Activated B cell treated with CpG ODN at 0.5 μM for 24 hours (primary cell): ENCODE measurements at regions of chr1 and their contacts with region 1.

Region 1: GRCh38 chr1:114511032-114511785 is at the start of gene TRIM33:
- DNase-seq: peak; percentile 93
- ATAC-seq: peak; percentile 73
- H3K4me3 Mint-ChIP-seq: peak within 1 kb of the TSS; percentile 98
- H3K27ac Mint-ChIP-seq: peak within 1 kb of the TSS; percentile 99
- H3K4me1 Mint-ChIP-seq: peaks cover 48% of the 10 kb centered on the region
- H3K27me3 Mint-ChIP-seq: no peaks in the 10 kb centered on the region
- CTCF ChIP-seq: no peak
- total RNA-seq, gene TRIM33: 38.4 and 41.2 TPM in 2 replicates

Region 2: DNA sequence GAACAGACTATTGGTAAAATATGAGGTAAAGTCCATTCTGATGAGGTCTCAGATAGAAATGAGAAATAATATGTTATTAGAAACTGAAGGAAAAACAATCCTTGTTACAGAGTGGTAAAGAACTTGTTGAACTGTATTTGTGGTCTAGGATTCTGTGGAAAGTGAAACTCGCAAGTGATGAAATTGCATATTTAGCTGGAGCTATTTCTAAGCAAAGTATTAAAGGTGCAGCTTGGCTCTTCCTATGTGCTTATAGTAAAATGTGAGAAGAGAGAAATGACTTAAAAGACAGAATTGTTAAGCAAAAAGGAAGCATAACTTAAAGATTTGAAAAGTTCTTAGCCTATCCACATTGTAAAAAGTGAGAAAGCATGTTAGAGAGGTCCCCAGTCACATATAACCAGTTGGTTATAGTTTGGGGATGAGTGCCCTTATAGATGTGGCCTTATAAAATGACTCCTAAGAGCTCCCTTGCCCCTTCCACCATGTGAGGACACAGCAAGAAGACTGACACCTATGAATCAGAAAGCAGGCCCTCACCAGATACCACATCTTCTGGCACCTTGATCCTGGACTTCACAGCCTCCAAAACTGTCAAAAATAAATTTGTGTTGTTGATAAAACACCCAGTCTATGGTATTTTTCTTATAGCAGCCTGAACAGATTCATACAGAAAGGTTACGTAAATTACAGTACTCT is 776.7 kb before region 1 on chr1:
- CTCF ChIA-PET with region 1: no interaction called
- POLR2A ChIA-PET with region 1: no interaction called
- intact Hi-C with region 1: no loop called
- DNase-seq: no peak
- ATAC-seq: no peak
- H3K4me3 Mint-ChIP-seq: no peak overlapping the region
- H3K27ac Mint-ChIP-seq: no peak overlapping the region
- H3K4me1 Mint-ChIP-seq: no peaks in the 10 kb centered on the region
- H3K27me3 Mint-ChIP-seq: no peaks in the 10 kb centered on the region
- CTCF ChIP-seq: no peak

Region 3: GRCh38 chr1:113928941-113929749 is 582.1 kb before region 1 on chr1 and contains the start of gene HIPK1:
- CTCF ChIA-PET with region 1: no interaction called
- POLR2A ChIA-PET with region 1: no interaction called
- intact Hi-C with region 1: loop called (anchors 5 kb)
- DNase-seq: peak; percentile 93
- ATAC-seq: peak; percentile 73
- H3K4me3 Mint-ChIP-seq: peak within 1 kb of the TSS; percentile 99
- H3K27ac Mint-ChIP-seq: peak within 1 kb of the TSS; percentile 99
- H3K4me1 Mint-ChIP-seq: peaks cover 50% of the 10 kb centered on the region
- H3K27me3 Mint-ChIP-seq: no peaks in the 10 kb centered on the region
- CTCF ChIP-seq: no peak
- total RNA-seq, gene HIPK1: 38.0 and 39.0 TPM in 2 replicates

Region 4: GRCh38 chr1:114482204-114482980 is 28.8 kb before region 1 on chr1:
- CTCF ChIA-PET with region 1: no interaction called
- POLR2A ChIA-PET with region 1: interaction called, 22 read pairs
- intact Hi-C with region 1: loop called (anchors 1 kb)
- DNase-seq: no peak
- ATAC-seq: peak; percentile 99
- H3K4me3 Mint-ChIP-seq: peak overlapping the region; percentile 72
- H3K27ac Mint-ChIP-seq: peak overlapping the region; percentile 91
- H3K4me1 Mint-ChIP-seq: peaks cover 54% of the 10 kb centered on the region
- H3K27me3 Mint-ChIP-seq: no peaks in the 10 kb centered on the region
- CTCF ChIP-seq: no peak

Region 5: GRCh38 chr1:114558544-114558943 is 47.3 kb after region 1 on chr1:
- CTCF ChIA-PET with region 1: no interaction called
- POLR2A ChIA-PET with region 1: interaction called, 14 read pairs
- intact Hi-C with region 1: loop called (anchors 1 kb)
- DNase-seq: no peak
- ATAC-seq: peak; percentile 59
- H3K4me3 Mint-ChIP-seq: no peak overlapping the region
- H3K27ac Mint-ChIP-seq: peak overlapping the region; percentile 62
- H3K4me1 Mint-ChIP-seq: peaks cover 34% of the 10 kb centered on the region
- H3K27me3 Mint-ChIP-seq: no peaks in the 10 kb centered on the region
- CTCF ChIP-seq: no peak

Region 6: GRCh38 chr1:114670083-114671010 is 159.1 kb after region 1 on chr1:
- CTCF ChIA-PET with region 1: no interaction called
- POLR2A ChIA-PET with region 1: no interaction called
- intact Hi-C with region 1: loop called (anchors 1 kb)
- DNase-seq: peak; percentile 80
- ATAC-seq: peak; percentile 99
- H3K4me3 Mint-ChIP-seq: peak overlapping the region; percentile 94
- H3K27ac Mint-ChIP-seq: peak overlapping the region; percentile 67
- H3K4me1 Mint-ChIP-seq: peaks cover 10% of the 10 kb centered on the region
- H3K27me3 Mint-ChIP-seq: peaks cover 30% of the 10 kb centered on the region
- CTCF ChIP-seq: no peak

Region 7: GRCh38 chr1:114780344-114781226 is 269.4 kb after region 1 on chr1 and contains the start of gene SIKE1:
- CTCF ChIA-PET with region 1: no interaction called
- POLR2A ChIA-PET with region 1: interaction called, 9 read pairs
- intact Hi-C with region 1: loop called (anchors 1 kb)
- DNase-seq: peak; percentile 80
- ATAC-seq: peak; percentile 97
- H3K4me3 Mint-ChIP-seq: peak within 1 kb of the TSS; percentile 100
- H3K27ac Mint-ChIP-seq: peak within 1 kb of the TSS; percentile 97
- H3K4me1 Mint-ChIP-seq: peaks cover 28% of the 10 kb centered on the region
- H3K27me3 Mint-ChIP-seq: peaks cover 7% of the 10 kb centered on the region
- CTCF ChIP-seq: no peak
- total RNA-seq, gene SIKE1: 38.4 and 44.2 TPM in 2 replicates